Activated B cell treated with CpG ODN at 0.5 μM for 24 hours (primary cell): ENCODE measurements at regions of chr6 and their contacts with region 1.

Region 1: GRCh38 chr6:158644231-158645063 is at the start of gene DYNLT1:
- DNase-seq: peak; percentile 97
- ATAC-seq: peak; percentile 68
- H3K4me3 Mint-ChIP-seq: peak within 1 kb of the TSS; percentile 95
- H3K27ac Mint-ChIP-seq: peak within 1 kb of the TSS; percentile 85
- H3K4me1 Mint-ChIP-seq: peaks cover 52% of the 10 kb centered on the region
- H3K27me3 Mint-ChIP-seq: no peaks in the 10 kb centered on the region
- CTCF ChIP-seq: no peak
- total RNA-seq, gene DYNLT1: 37.7 and 43.9 TPM in 2 replicates

Region 2: GRCh38 chr6:159110013-159110412 is 465.6 kb after region 1 on chr6:
- CTCF ChIA-PET with region 1: no interaction called
- POLR2A ChIA-PET with region 1: interaction called, 10 read pairs
- intact Hi-C with region 1: loop called (anchors 5 kb)
- DNase-seq: no peak
- ATAC-seq: no peak
- H3K4me3 Mint-ChIP-seq: no peak overlapping the region
- H3K27ac Mint-ChIP-seq: peak overlapping the region; percentile 73
- H3K4me1 Mint-ChIP-seq: peaks cover 87% of the 10 kb centered on the region
- H3K27me3 Mint-ChIP-seq: no peaks in the 10 kb centered on the region
- CTCF ChIP-seq: peak; percentile 29